AG04449 (cell line): ENCODE measurements at regions of chr2 and their contacts with region 1.

Region 1: GRCh38 chr2:42196403-42197267 is 27.5 kb downstream of the EML4 start:
- DNase-seq: no peak
- H3K4me3 ChIP-seq: no peak overlapping the region
- CTCF ChIP-seq: peak; percentile 28

Region 2: GRCh38 chr2:42185220-42185921 is 11.3 kb before region 1 on chr2:
- CTCF ChIA-PET with region 1: interaction called, 13 read pairs
- POLR2A ChIA-PET with region 1: no interaction called
- DNase-seq: no peak
- H3K4me3 ChIP-seq: no peak overlapping the region
- CTCF ChIP-seq: no peak